OCI-LY7 (cell line): ENCODE measurements at regions of chr3 and their contacts with region 1.

Region 1: DNA sequence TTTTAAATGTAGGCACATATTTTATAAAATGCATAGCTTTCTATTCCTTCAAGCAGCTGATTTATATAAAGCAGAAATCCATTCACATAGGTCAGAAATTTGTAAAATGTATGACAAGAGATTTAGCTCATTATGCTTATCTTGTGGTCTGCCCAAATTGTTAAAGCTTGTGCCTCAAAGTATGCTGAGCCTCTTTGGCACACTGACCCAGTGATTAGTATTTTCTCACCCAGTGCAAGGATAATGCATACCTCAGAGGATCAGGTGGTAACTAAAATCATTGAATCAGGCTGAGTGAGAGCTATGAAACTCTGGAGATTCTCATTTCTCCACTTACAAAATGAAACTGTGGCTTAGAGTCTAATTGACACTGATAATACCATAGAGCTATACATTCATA is 533.3 kb downstream of the FGF12 start:
- DNase-seq: no peak
- H3K4me3 ChIP-seq: no peak overlapping the region
- H3K27ac ChIP-seq: no peak overlapping the region
- H3K4me1 ChIP-seq: no peaks in the 10 kb centered on the region
- CTCF ChIP-seq: no peak

Region 2: DNA sequence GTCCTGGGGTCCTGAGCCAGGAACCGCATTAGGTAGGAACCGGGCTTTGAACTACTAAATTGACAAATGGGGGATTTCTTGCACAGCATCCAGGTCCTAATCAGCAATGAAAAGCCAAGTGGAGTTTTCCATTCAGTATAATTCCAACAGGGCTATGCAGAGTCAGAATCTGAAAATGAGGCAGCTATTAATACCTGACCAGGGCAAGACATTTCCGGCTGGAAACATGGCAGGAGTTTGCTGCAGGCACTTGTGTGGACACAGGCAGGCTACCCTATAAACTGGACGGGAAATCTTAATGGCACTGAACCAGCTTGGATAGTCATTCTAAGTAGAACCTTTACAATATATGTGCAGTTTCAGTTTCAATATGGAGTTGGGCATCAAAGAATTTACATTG is 19.8 kb before region 1 on chr3:
- CTCF ChIA-PET with region 1: no interaction called
- POLR2A ChIA-PET with region 1: no interaction called
- intact Hi-C with region 1: no loop called
- DNase-seq: no peak
- H3K4me3 ChIP-seq: no peak overlapping the region
- H3K27ac ChIP-seq: no peak overlapping the region
- H3K4me1 ChIP-seq: peaks cover 9% of the 10 kb centered on the region
- CTCF ChIP-seq: no peak

Region 3: DNA sequence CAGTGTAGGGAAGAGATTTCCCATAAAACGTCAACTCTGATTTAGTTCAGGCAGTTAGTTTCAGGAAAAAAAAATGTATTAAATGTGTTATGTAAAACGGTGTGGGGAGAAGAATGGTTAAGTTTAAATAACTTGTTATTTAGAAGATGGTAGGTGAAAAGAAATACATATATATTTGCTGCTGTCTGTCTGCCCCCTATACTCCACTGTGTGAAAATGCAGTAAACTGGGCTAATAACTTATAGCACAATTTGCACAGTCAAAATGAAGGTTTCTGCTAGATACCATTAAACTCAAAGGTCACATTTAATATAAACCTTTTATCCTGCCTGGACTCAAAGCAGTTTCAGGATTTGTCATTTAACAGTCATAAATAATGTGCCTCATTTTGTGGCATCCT is 18.2 kb after region 1 on chr3:
- CTCF ChIA-PET with region 1: interaction called, 3 read pairs
- POLR2A ChIA-PET with region 1: interaction called, 12 read pairs
- intact Hi-C with region 1: no loop called
- DNase-seq: peak; percentile 44
- H3K4me3 ChIP-seq: no peak overlapping the region
- H3K27ac ChIP-seq: no peak overlapping the region
- H3K4me1 ChIP-seq: no peaks in the 10 kb centered on the region
- CTCF ChIP-seq: peak; percentile 77

Region 4: DNA sequence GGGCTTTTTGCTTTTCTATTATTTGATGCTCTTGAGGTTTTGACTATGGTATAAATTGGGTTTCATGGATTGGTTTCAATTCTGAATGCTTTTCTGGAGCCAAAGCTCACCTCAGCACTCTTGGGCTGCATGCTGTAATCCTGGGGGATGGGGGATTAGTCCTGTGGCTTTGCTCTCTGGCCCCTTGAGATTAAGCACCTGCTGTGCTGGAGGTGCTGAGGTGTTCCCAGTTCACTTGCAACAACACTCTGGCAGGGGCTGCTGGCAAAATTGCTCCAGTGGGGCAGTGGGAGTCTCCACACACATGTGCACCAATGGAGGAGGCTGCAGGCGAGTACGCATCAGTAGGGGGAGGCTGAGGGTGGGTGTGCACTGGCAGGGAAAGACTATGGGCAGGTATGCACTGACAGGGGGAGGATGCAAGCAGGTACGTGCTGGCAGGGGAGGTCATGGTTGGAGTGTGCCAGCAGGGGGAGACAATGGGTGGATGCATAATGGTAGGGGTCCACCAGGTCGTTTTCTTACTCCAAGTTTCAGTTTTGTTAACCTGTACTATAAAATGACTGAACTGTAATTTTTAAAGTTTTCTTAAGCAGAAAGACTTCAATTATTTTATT is 44.0 kb after region 1 on chr3:
- CTCF ChIA-PET with region 1: no interaction called
- POLR2A ChIA-PET with region 1: no interaction called
- intact Hi-C with region 1: no loop called
- DNase-seq: peak; percentile 5
- H3K4me3 ChIP-seq: no peak overlapping the region
- H3K27ac ChIP-seq: no peak overlapping the region
- H3K4me1 ChIP-seq: no peaks in the 10 kb centered on the region
- CTCF ChIP-seq: peak; percentile 65

Region 5: DNA sequence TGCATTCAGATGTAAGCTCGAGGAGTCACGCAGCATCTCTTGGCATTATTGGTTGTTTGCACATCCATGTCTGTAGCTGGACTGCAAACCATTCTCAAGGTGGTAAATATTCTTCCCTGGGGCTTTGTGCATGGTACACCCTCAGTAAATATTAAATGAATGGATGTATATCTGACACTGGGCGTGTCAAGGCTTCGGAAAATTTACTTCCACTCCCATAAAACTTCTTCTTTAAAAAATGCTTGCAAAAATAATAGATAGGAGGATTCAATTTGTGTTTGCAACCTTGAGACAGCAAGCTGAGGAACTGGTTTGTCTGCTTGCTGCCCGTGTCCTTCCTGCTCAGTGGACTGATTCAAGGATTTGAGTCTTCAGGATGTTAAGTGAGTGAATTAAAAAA is 79.4 kb after region 1 on chr3:
- CTCF ChIA-PET with region 1: no interaction called
- POLR2A ChIA-PET with region 1: no interaction called
- intact Hi-C with region 1: no loop called
- DNase-seq: no peak
- H3K4me3 ChIP-seq: no peak overlapping the region
- H3K27ac ChIP-seq: no peak overlapping the region
- H3K4me1 ChIP-seq: no peaks in the 10 kb centered on the region
- CTCF ChIP-seq: no peak

Region 6: GRCh38 chr3:192339214-192339613 is 145.1 kb after region 1 on chr3:
- CTCF ChIA-PET with region 1: no interaction called
- POLR2A ChIA-PET with region 1: no interaction called
- intact Hi-C with region 1: no loop called
- DNase-seq: no peak
- H3K4me3 ChIP-seq: no peak overlapping the region
- H3K27ac ChIP-seq: no peak overlapping the region
- H3K4me1 ChIP-seq: no peaks in the 10 kb centered on the region
- CTCF ChIP-seq: no peak